PC-3 (cell line): ENCODE measurements at regions of chr3 and their contacts with region 1.

Region 1: GRCh38 chr3:73100741-73101559 is 39.5 kb downstream of the EBLN2 start:
- DNase-seq: peak; percentile 92
- ATAC-seq: peak; percentile 95
- H3K4me3 ChIP-seq: no peak overlapping the region
- H3K27ac ChIP-seq: no peak overlapping the region
- H3K4me1 ChIP-seq: no peaks in the 10 kb centered on the region
- H3K27me3 ChIP-seq: peaks cover 42% of the 10 kb centered on the region
- CTCF ChIP-seq: peak; percentile 96

Region 2: GRCh38 chr3:73121669-73122331 is 20.9 kb after region 1 on chr3:
- CTCF ChIA-PET with region 1: no interaction called
- POLR2A ChIA-PET with region 1: no interaction called
- intact Hi-C with region 1: no loop called
- DNase-seq: no peak
- ATAC-seq: no peak
- H3K4me3 ChIP-seq: no peak overlapping the region
- H3K27ac ChIP-seq: no peak overlapping the region
- H3K4me1 ChIP-seq: no peaks in the 10 kb centered on the region
- H3K27me3 ChIP-seq: peaks cover 54% of the 10 kb centered on the region
- CTCF ChIP-seq: no peak

Region 3: GRCh38 chr3:73228437-73228836 is 127.5 kb after region 1 on chr3:
- CTCF ChIA-PET with region 1: no interaction called
- POLR2A ChIA-PET with region 1: no interaction called
- intact Hi-C with region 1: no loop called
- DNase-seq: no peak
- ATAC-seq: no peak
- H3K4me3 ChIP-seq: no peak overlapping the region
- H3K27ac ChIP-seq: no peak overlapping the region
- H3K4me1 ChIP-seq: no peaks in the 10 kb centered on the region
- H3K27me3 ChIP-seq: peaks cover 67% of the 10 kb centered on the region
- CTCF ChIP-seq: no peak

Region 4: GRCh38 chr3:73432023-73432705 is 331.2 kb after region 1 on chr3:
- CTCF ChIA-PET with region 1: no interaction called
- POLR2A ChIA-PET with region 1: no interaction called
- intact Hi-C with region 1: loop called (anchors 1 kb)
- DNase-seq: peak; percentile 55
- ATAC-seq: no peak
- H3K4me3 ChIP-seq: no peak overlapping the region
- H3K27ac ChIP-seq: no peak overlapping the region
- H3K4me1 ChIP-seq: no peaks in the 10 kb centered on the region
- H3K27me3 ChIP-seq: peaks cover 15% of the 10 kb centered on the region
- CTCF ChIP-seq: peak; percentile 80